Heart right ventricle (tissue), 16 donors: ENCODE measurements at regions of chr14 and their contacts with region 1.

Region 1: GRCh38 chr14:80996049-80996901 is 40.9 kb downstream of the TSHR start:
- DNase-seq: peak in 1 of 2 donors; percentile 59
- ATAC-seq: peak; percentile 72 to 95 (median 90)
- H3K4me3 ChIP-seq: no peak overlapping the region
- H3K27ac ChIP-seq: no peak overlapping the region
- H3K4me1 ChIP-seq: peaks cover 0 to 12% (median 0%) of the 10 kb centered on the region in 9 donors
- H3K27me3 ChIP-seq: peaks cover 0 to 17% (median 0%) of the 10 kb centered on the region in 7 donors
- CTCF ChIP-seq: peak in 8 of 9 donors; percentile 40 to 77 (median 68)

Region 2: DNA sequence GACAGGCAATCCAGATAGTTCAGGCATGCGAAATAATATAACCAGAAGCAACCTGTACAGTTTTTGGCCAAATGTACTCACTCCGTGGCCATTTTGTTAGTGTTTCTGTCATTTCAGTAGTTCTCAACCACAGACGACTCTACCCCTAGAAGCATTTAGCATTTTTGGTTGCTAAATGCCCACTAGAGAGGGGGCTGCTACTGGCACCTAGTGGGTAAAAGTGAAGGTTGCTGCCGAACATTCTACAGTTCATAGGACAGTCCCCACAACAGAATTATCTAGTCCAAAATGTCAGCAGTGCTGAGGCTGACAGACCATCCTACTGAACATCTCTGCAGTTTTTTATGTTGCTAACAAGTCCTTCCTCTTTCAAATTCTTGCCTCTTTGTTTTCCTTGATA is 66.5 kb after region 1 on chr14:
- intact Hi-C with region 1: loop called in 1 of 10 experiments (anchors 2 kb)
- DNase-seq: peak in 1 of 2 donors; percentile 3
- ATAC-seq: peak in 1 of 8 donors; percentile 42
- H3K4me3 ChIP-seq: no peak overlapping the region
- H3K27ac ChIP-seq: no peak overlapping the region
- H3K4me1 ChIP-seq: no peaks in the 10 kb centered on the region
- H3K27me3 ChIP-seq: no peaks in the 10 kb centered on the region
- CTCF ChIP-seq: peak in 5 of 9 donors; percentile 24 to 41 (median 36)

Region 3: GRCh38 chr14:81170104-81170828 is 174.0 kb after region 1 on chr14:
- intact Hi-C with region 1: loop called in 8 of 10 experiments (anchors 1 to 10 kb)
- DNase-seq: peak; percentile 93
- ATAC-seq: peak; percentile 98 to 100 (median 100)
- H3K4me3 ChIP-seq: peak overlapping the region; percentile 65 to 84 (median 74)
- H3K27ac ChIP-seq: peak overlapping the region; percentile 87 to 98 (median 92)
- H3K4me1 ChIP-seq: peaks cover 0 to 28% (median 8%) of the 10 kb centered on the region in 9 donors
- H3K27me3 ChIP-seq: no peaks in the 10 kb centered on the region
- CTCF ChIP-seq: peak; percentile 89 to 95 (median 93)

Region 4: DNA sequence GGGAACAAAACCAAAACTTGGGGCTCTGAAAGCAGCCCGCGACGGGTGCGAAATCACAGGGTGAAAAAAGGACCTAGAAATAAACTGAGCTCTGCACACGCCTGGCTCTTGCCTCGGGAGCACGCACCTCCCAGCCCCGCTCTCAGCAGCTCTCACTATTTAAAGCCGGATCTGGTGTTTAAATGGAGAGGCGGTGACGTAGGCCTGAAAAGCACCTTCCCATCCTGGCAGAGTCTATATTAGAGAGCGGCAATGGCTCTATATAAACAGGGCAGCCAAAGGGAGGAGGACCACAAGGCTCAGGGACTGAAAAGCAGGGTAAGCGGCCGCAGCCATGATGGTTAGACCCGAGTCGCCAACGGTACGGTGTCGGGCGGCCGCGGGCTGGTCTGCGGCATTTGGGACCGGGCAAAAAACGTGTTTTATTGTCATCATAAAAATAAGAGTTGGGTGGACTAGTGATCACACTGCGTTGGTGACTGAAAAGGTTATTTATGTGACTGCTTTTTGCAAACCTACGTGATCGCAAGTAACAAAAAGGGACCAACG is 223.0 kb after region 1 on chr14:
- intact Hi-C with region 1: loop called in 5 of 10 experiments (anchors 5 to 10 kb)
- DNase-seq: peak; percentile 84 to 96
- ATAC-seq: peak; percentile 73 to 88 (median 84)
- H3K4me3 ChIP-seq: peak overlapping the region; percentile 70 to 89 (median 84)
- H3K27ac ChIP-seq: peak overlapping the region; percentile 94 to 100 (median 98)
- H3K4me1 ChIP-seq: peaks cover 0 to 41% (median 27%) of the 10 kb centered on the region in 9 donors
- H3K27me3 ChIP-seq: no peaks in the 10 kb centered on the region
- CTCF ChIP-seq: no peak

Region 5: GRCh38 chr14:81464247-81465002 is 468.1 kb after region 1 on chr14:
- intact Hi-C with region 1: loop called in 5 of 10 experiments (anchors 5 to 10 kb)
- DNase-seq: peak in 1 of 2 donors; percentile 63
- ATAC-seq: peak in 6 of 8 donors; percentile 43 to 54 (median 51)
- H3K4me3 ChIP-seq: peak overlapping the region in 9 of 10 donors; percentile 21 to 60 (median 51)
- H3K27ac ChIP-seq: peak overlapping the region in 4 of 10 donors; percentile 33 to 89 (median 46)
- H3K4me1 ChIP-seq: peaks cover 0 to 10% (median 0%) of the 10 kb centered on the region in 9 donors
- H3K27me3 ChIP-seq: no peaks in the 10 kb centered on the region
- CTCF ChIP-seq: peak; percentile 81 to 94 (median 89)